ENCODE measurements at regions of chrX and their contacts with region 1.

Region 1: GRCh38 chrX:128975745-128976144 is 547.5 kb downstream of the SMARCA1 start:
- DNase-seq: peak; percentile 39
- H3K4me3 ChIP-seq: no peak overlapping the region
- H3K27ac ChIP-seq: no peak overlapping the region
- H3K4me1 ChIP-seq: no peaks in the 10 kb centered on the region
- H3K27me3 ChIP-seq: no peaks in the 10 kb centered on the region
- CTCF ChIP-seq: peak; percentile 54 to 58 (median 56)
- EP300 ChIP-seq: no peak
- POLR2A ChIP-seq: no peak

Region 2: GRCh38 chrX:128460834-128461233 is 514.9 kb before region 1 on chrX:
- in situ Hi-C with region 1: loop called in 1 of 4 experiments (anchors 25 kb)
- intact Hi-C with region 1: no loop called
- DNase-seq: no peak
- H3K4me3 ChIP-seq: no peak overlapping the region
- H3K27ac ChIP-seq: no peak overlapping the region
- H3K4me1 ChIP-seq: no peaks in the 10 kb centered on the region
- H3K27me3 ChIP-seq: no peaks in the 10 kb centered on the region
- CTCF ChIP-seq: peak in 2 of 5 experiments; percentile 14 to 17
- EP300 ChIP-seq: no peak
- POLR2A ChIP-seq: no peak

Region 3: GRCh38 chrX:128862557-128862956 is 113.2 kb before region 1 on chrX:
- in situ Hi-C with region 1: no loop called
- intact Hi-C with region 1: no loop called
- DNase-seq: no peak
- H3K4me3 ChIP-seq: no peak overlapping the region
- H3K27ac ChIP-seq: no peak overlapping the region
- H3K4me1 ChIP-seq: no peaks in the 10 kb centered on the region
- H3K27me3 ChIP-seq: no peaks in the 10 kb centered on the region
- CTCF ChIP-seq: no peak
- EP300 ChIP-seq: no peak
- POLR2A ChIP-seq: no peak

Measured in transverse colon (tissue), 4 donors.